ENCODE measurements at regions of chr5 and their contacts with region 1.

Region 1: DNA sequence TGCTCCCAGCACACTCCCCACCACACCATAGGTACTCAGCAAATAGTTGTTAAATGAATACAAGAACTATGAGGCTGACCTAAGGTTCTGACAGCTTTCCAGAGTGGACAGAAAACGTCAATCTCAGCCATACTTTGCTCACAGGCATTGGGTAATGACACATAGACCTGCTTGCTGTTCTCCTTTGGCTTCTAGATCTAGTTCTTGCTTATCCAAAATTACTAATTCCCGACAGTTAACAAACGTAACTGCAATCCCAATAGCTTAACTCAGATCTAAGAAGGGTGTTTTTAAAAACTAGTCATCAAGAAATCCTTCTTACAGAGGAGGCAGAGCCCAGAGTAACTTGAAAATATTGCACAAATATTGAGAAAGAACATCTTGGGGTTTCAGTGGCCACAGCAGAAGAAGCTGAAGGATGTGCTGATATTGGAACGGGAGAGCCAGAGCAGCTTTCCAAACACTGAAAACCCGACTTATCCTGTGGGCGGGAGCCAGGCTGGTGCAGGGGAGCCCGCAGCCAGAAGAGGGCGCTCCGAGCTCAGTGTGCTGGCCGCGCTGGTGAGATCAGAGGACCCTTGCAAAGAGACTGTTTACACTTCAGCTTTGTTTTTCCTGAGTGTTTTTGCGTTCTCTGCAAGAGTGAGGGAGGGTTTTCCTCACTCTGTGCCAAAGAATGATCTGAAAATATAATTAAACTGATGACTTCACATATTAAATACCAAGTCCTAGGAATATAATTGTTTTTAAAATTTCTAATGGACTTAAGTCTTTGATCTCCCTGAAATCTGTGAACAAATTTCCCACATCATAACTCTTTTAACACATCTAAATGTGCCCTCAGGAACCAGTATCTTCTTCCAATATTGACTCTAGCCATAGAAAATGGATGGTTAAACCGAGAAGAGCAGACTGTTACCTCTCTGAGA is 30.3 kb downstream of the FGF1 start:
- DNase-seq: peak; percentile 33 to 93
- H3K4me3 ChIP-seq: peak overlapping the region in 1 of 2 donors; percentile 9
- H3K27ac ChIP-seq: peak overlapping the region; percentile 61 to 71
- H3K4me1 ChIP-seq: peaks cover 0 to 8% of the 10 kb centered on the region in 2 donors
- H3K27me3 ChIP-seq: no peaks in the 10 kb centered on the region
- CTCF ChIP-seq: peak; percentile 94 to 99 (median 97)

Region 2: GRCh38 chr5:142611154-142611553 is 44.4 kb before region 1 on chr5:
- intact Hi-C with region 1: loop called (anchors 1 kb)
- DNase-seq: peak; percentile 28 to 88
- H3K4me3 ChIP-seq: no peak overlapping the region
- H3K27ac ChIP-seq: no peak overlapping the region
- H3K4me1 ChIP-seq: no peaks in the 10 kb centered on the region
- H3K27me3 ChIP-seq: no peaks in the 10 kb centered on the region
- CTCF ChIP-seq: peak; percentile 81 to 98 (median 98)

Region 3: GRCh38 chr5:142644640-142645361 is 10.8 kb before region 1 on chr5:
- intact Hi-C with region 1: no loop called
- DNase-seq: peak; percentile 12 to 85
- H3K4me3 ChIP-seq: peak overlapping the region in 1 of 2 donors; percentile 38
- H3K27ac ChIP-seq: peak overlapping the region; percentile 74 to 82
- H3K4me1 ChIP-seq: peaks cover 0 to 19% of the 10 kb centered on the region in 2 donors
- H3K27me3 ChIP-seq: no peaks in the 10 kb centered on the region
- CTCF ChIP-seq: no peak

Region 4: GRCh38 chr5:142874537-142874936 is 218.9 kb after region 1 on chr5:
- intact Hi-C with region 1: loop called (anchors 5 kb)
- DNase-seq: peak; percentile 55 to 96
- H3K4me3 ChIP-seq: no peak overlapping the region
- H3K27ac ChIP-seq: peak overlapping the region; percentile 42 to 56
- H3K4me1 ChIP-seq: peaks cover 13 to 27% of the 10 kb centered on the region in 2 donors
- H3K27me3 ChIP-seq: no peaks in the 10 kb centered on the region
- CTCF ChIP-seq: no peak

Region 5: GRCh38 chr5:142888469-142889085 is 233.0 kb after region 1 on chr5:
- intact Hi-C with region 1: loop called (anchors 5 kb)
- DNase-seq: no peak
- H3K4me3 ChIP-seq: no peak overlapping the region
- H3K27ac ChIP-seq: no peak overlapping the region
- H3K4me1 ChIP-seq: peaks cover 0 to 3% of the 10 kb centered on the region in 2 donors
- H3K27me3 ChIP-seq: no peaks in the 10 kb centered on the region
- CTCF ChIP-seq: peak; percentile 70 to 79 (median 75)

Region 6: DNA sequence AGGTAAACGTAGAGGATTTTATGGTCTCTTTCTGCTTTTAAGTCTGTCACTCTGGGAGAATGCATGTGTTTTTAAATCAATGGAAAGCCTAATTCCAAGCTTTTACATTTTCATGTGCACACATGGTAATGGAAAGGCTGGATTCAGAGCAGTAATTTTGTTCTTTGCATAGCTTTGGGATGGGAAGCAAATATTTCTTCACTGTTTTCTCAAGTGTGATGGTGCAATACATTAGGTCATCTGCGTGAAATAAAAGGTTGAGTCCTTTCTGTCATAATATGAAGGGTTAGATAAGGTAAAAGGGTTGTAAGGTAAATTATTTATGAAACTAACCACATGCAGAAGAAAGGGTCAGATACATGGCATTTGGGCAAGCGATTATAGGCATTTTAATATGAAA is 836.0 kb after region 1 on chr5:
- intact Hi-C with region 1: no loop called
- DNase-seq: no peak
- H3K4me3 ChIP-seq: no peak overlapping the region
- H3K27ac ChIP-seq: no peak overlapping the region
- H3K4me1 ChIP-seq: peaks cover 0 to 8% of the 10 kb centered on the region in 2 donors
- H3K27me3 ChIP-seq: no peaks in the 10 kb centered on the region
- CTCF ChIP-seq: no peak

Measured in ascending aorta (tissue), 2 donors.